ENCODE measurements at regions of chr1 and their contacts with region 1.

Region 1: DNA sequence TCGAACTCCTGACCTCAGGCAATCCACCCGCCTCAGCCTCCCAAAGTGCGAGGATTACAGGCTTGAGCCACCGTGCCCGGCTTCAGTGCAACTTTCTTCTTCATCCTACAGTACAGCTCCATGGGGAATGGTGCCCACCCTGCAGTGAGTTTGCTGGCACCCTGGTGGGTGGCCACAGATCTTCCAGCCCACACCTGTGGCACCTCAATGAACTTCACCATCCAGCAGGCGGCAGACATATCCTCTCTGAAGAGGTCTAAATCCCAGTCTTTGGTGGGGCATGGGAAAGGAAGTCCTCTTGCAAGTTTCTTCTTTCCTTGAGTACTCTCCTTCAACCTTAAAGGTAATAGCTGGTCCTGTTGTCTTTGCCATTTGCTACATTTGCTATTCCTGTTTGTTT is 18.1 kb upstream of the ZBTB8A start:
- DNase-seq: no peak
- CTCF ChIP-seq: no peak

Region 2: GRCh38 chr1:32496127-32496526 is 25.0 kb before region 1 on chr1:
- CTCF ChIA-PET with region 1: interaction called, 18 read pairs
- POLR2A ChIA-PET with region 1: no interaction called
- DNase-seq: no peak
- CTCF ChIP-seq: no peak

Region 3: GRCh38 chr1:32507021-32507420 is 14.1 kb before region 1 on chr1:
- CTCF ChIA-PET with region 1: interaction called, 10 read pairs
- POLR2A ChIA-PET with region 1: interaction called, 7 read pairs
- DNase-seq: no peak
- CTCF ChIP-seq: no peak

Region 4: GRCh38 chr1:32536117-32536516 is 15.0 kb after region 1 on chr1:
- CTCF ChIA-PET with region 1: interaction called, 36 read pairs
- POLR2A ChIA-PET with region 1: no interaction called
- DNase-seq: no peak
- CTCF ChIP-seq: no peak

Region 5: GRCh38 chr1:32870615-32871363 is 349.6 kb after region 1 on chr1 and contains the start of gene FNDC5:
- CTCF ChIA-PET with region 1: interaction called, 18 read pairs
- POLR2A ChIA-PET with region 1: no interaction called
- DNase-seq: no peak
- CTCF ChIP-seq: no peak

Region 6: GRCh38 chr1:32981003-32981901 is 460.1 kb after region 1 on chr1:
- CTCF ChIA-PET with region 1: no interaction called
- POLR2A ChIA-PET with region 1: no interaction called
- DNase-seq: peak; percentile 85
- CTCF ChIP-seq: no peak

Measured in GM10248 (cell line).